ENCODE measurements at regions of chr7 and their contacts with region 1.

Region 1: DNA sequence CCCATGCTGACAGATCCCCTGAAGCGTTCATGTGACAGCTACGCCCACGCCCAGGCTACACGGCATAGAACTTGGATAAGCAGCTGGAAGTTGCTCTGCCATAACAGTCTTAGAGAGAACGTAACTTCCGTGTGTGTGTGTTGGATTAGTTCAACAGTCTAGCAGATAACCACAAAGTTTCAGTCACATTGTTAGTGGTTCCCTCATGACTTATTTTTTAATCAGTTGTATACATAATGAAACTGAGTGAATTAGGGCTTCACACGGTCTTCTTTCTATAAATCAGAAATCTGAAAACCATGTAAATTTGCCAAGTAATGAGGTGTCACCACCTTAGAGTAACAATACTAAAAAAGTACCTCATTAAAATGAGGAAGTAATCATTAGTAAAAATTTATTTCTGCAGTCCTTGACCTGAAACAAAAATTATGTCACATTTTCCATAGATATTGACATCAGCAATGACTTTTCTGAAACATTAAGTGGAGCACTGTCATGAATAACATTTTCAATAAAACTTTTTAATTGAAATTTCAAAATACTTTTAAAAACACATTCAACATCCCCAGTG is 21.7 kb upstream of the MACC1 start:
- DNase-seq: peak; percentile 34
- ATAC-seq: peak; percentile 86
- H3K4me3 Mint-ChIP-seq: peak overlapping the region; percentile 73
- H3K27ac Mint-ChIP-seq: peak overlapping the region; percentile 92
- H3K4me1 Mint-ChIP-seq: peaks cover 69% of the 10 kb centered on the region
- H3K27me3 Mint-ChIP-seq: no peaks in the 10 kb centered on the region
- CTCF ChIP-seq: no peak

Region 2: GRCh38 chr7:18337048-18337809 is 1901.6 kb before region 1 on chr7:
- CTCF ChIA-PET with region 1: no interaction called
- POLR2A ChIA-PET with region 1: no interaction called
- intact Hi-C with region 1: loop called (anchors 10 kb)
- DNase-seq: no peak
- ATAC-seq: peak; percentile 51
- H3K4me3 Mint-ChIP-seq: peak overlapping the region; percentile 71
- H3K27ac Mint-ChIP-seq: peak overlapping the region; percentile 78
- H3K4me1 Mint-ChIP-seq: peaks cover 72% of the 10 kb centered on the region
- H3K27me3 Mint-ChIP-seq: no peaks in the 10 kb centered on the region
- CTCF ChIP-seq: no peak

Region 3: DNA sequence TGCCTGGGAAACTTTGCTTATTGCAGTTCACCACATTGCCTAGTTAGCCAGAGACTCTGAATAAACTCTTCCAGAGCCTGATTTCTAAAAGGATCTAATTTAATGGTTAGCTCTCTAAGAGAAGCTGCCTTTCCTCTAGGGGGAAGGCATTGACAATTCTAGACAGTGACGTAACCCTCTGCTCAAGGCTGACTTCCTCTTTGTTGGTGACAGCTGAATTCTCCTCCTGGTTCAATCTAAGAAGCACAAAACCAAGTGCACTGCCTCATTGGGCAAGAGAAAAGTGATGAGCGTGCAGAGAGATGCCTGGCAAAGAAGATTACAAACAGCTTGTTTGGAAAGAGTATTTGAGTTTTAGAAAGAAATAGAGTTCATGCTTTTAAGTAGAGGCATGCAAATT is 124.4 kb before region 1 on chr7:
- CTCF ChIA-PET with region 1: no interaction called
- POLR2A ChIA-PET with region 1: no interaction called
- intact Hi-C with region 1: loop called (anchors 1 kb)
- DNase-seq: no peak
- ATAC-seq: peak; percentile 90
- H3K4me3 Mint-ChIP-seq: peak overlapping the region; percentile 39
- H3K27ac Mint-ChIP-seq: peak overlapping the region; percentile 54
- H3K4me1 Mint-ChIP-seq: peaks cover 25% of the 10 kb centered on the region
- H3K27me3 Mint-ChIP-seq: no peaks in the 10 kb centered on the region
- CTCF ChIP-seq: no peak

Region 4: DNA sequence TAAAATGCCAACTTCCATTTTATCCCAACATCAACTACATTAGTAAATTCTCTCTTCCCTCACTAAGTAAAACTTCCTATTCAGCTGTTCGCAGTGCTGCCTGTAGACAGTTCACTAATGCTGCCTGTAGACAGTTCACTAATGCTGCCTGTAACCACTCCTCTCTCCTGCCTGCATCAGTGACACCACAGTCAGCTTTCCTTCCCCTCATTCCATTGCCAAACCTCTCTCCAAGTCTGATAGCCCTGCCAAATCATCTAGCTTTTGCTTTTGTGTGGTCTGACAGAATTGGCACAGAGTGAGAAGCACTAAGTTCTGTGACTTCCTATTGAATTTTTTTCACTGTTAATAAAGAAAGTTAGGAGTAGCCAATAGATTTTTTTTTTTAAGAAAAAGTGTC is 21.4 kb after region 1 on chr7:
- CTCF ChIA-PET with region 1: no interaction called
- POLR2A ChIA-PET with region 1: no interaction called
- intact Hi-C with region 1: loop called (anchors 2 kb)
- DNase-seq: no peak
- ATAC-seq: no peak
- H3K4me3 Mint-ChIP-seq: no peak overlapping the region
- H3K27ac Mint-ChIP-seq: no peak overlapping the region
- H3K4me1 Mint-ChIP-seq: no peaks in the 10 kb centered on the region
- H3K27me3 Mint-ChIP-seq: no peaks in the 10 kb centered on the region
- CTCF ChIP-seq: no peak

Region 5: GRCh38 chr7:20299647-20300312 is 60.9 kb after region 1 on chr7:
- CTCF ChIA-PET with region 1: interaction called, 3 read pairs
- POLR2A ChIA-PET with region 1: no interaction called
- intact Hi-C with region 1: loop called (anchors 1 kb)
- DNase-seq: no peak
- ATAC-seq: peak; percentile 14
- H3K4me3 Mint-ChIP-seq: no peak overlapping the region
- H3K27ac Mint-ChIP-seq: peak overlapping the region; percentile 59
- H3K4me1 Mint-ChIP-seq: peaks cover 42% of the 10 kb centered on the region
- H3K27me3 Mint-ChIP-seq: no peaks in the 10 kb centered on the region
- CTCF ChIP-seq: no peak

Region 6: GRCh38 chr7:21352540-21353387 is 1113.9 kb after region 1 on chr7:
- CTCF ChIA-PET with region 1: no interaction called
- POLR2A ChIA-PET with region 1: no interaction called
- intact Hi-C with region 1: loop called (anchors 10 kb)
- DNase-seq: no peak
- ATAC-seq: peak; percentile 84
- H3K4me3 Mint-ChIP-seq: peak overlapping the region; percentile 71
- H3K27ac Mint-ChIP-seq: peak overlapping the region; percentile 88
- H3K4me1 Mint-ChIP-seq: peaks cover 58% of the 10 kb centered on the region
- H3K27me3 Mint-ChIP-seq: no peaks in the 10 kb centered on the region
- CTCF ChIP-seq: no peak

Measured in activated B cell treated with CpG ODN at 0.5 μM for 24 hours (primary cell).